ENCODE measurements at regions of chr19 and their contacts with region 1.

Region 1: GRCh38 chr19:41563854-41564514 is 12.0 kb upstream of the CEACAM21 start:
- DNase-seq: no peak
- H3K4me3 ChIP-seq: no peak overlapping the region
- H3K27ac ChIP-seq: no peak overlapping the region
- H3K4me1 ChIP-seq: no peaks in the 10 kb centered on the region
- H3K27me3 ChIP-seq: peaks cover 16% of the 10 kb centered on the region
- CTCF ChIP-seq: no peak

Region 2: DNA sequence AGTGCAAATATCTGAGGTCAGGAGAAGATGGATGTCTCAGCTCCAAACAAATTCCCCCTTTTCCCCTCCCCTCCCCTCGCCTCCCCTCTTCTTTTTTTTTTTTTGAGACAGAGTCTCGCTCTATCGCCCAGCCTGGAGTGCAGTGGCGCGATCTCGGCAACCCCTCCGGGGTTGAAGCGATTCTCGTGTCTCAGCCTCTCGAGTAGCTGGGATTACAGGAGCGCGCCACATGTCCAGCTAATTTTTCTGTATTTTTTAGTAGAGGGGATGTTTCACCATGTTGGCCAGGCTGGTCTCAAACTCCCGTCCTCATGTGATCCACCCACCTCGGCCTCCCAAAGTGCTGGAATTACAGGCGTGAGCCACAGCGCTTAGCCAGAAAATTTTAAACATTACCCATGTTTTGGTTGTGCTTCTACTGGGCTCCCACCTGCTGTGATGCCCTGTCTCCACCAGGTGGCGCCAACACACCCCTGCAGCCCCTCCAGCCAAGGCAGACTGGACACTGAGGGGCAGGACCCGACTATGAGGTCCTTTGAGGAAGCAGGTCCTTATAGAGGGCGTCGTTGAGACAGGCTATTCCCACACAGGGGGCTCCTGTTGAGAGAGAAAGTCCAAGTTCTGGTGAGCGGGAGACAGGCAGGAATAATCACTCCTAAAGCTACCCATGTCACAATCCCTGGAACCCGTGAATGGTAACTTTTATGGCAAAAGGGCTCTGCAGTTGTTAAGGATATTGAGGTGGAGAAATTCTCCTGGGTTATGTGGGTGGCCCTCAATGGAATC is 114.7 kb before region 1 on chr19:
- intact Hi-C with region 1: loop called (anchors 5 kb)
- DNase-seq: peak in 1 of 2 donors; percentile 87
- H3K4me3 ChIP-seq: peak overlapping the region in 1 of 2 donors; percentile 55
- H3K27ac ChIP-seq: no peak overlapping the region
- H3K4me1 ChIP-seq: peaks cover 0 to 2% of the 10 kb centered on the region in 2 donors
- H3K27me3 ChIP-seq: no peaks in the 10 kb centered on the region
- CTCF ChIP-seq: peak; percentile 88 to 98 (median 98)

Measured in ascending aorta (tissue), 2 donors.